ENCODE measurements at regions of chr7 and their contacts with region 1.

Region 1: DNA sequence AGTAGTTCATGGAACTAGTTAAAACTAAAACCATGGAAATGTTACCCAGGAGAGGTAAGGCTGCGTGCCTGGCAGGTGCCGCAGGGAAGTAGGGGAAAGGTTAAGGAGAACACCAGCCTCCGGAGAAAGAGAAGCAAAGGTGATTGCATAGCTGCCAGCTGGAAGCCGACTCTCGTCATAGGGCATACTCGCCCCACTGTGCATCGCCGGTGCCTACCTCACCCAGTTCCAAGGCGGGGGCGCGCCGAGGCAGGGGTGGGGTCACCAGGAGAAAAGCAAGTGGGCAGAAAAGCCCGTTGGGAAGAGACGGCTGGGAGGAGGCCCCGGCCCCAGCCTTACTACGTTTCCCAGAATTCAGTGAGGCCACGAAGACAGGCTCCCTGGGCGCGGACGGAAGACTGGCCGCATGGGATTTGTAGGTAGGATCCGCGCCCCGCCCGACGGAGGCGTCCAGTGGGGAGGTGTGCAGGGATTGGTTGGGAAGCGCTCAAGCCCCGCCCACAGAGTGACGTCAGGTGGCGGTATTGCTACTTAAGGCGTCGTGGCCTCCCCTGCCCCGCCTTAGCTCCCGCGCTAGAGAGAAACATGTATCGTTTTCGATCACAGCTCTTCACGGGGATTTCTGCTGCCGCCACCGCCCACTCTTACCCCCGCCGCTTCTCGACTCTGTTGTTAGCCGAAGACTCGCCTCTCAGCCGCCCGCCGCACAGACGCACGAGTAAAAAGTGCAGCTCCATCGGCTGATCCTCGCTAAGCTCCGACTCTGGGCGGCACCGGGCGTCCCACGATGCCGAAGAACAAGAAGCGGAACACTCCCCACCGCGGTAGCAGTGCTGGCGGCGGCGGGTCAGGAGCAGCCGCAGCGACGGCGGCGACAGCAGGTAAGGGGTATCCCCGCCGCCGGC is at the start of gene IFRD1:
- DNase-seq: peak; percentile 99 to 100 (median 99)
- ATAC-seq: peak; percentile 89
- H3K4me3 ChIP-seq: peak within 1 kb of the TSS; percentile 88
- H3K27ac ChIP-seq: peak within 1 kb of the TSS; percentile 87
- H3K4me1 ChIP-seq: peaks cover 8 to 12% of the 10 kb centered on the region in 2 experiments; a peak in 4 of 5 replicates
- H3K27me3 ChIP-seq: no peaks in the 10 kb centered on the region
- CTCF ChIP-seq: 0 out of 6 replicates have a peak, but pooled peaks of 1 of the 3 experiments have one; percentile 6
- EP300 ChIP-seq: no peak; the same call in none of the 2 replicates
- POLR2A ChIP-seq: peak; percentile 100
- RAD21 ChIP-seq: peak in 1 of 2 experiments; percentile 13; a peak in 2 of 4 replicates
- polyA plus RNA-seq, gene IFRD1: 27.6 to 37.0 TPM

Region 2: DNA sequence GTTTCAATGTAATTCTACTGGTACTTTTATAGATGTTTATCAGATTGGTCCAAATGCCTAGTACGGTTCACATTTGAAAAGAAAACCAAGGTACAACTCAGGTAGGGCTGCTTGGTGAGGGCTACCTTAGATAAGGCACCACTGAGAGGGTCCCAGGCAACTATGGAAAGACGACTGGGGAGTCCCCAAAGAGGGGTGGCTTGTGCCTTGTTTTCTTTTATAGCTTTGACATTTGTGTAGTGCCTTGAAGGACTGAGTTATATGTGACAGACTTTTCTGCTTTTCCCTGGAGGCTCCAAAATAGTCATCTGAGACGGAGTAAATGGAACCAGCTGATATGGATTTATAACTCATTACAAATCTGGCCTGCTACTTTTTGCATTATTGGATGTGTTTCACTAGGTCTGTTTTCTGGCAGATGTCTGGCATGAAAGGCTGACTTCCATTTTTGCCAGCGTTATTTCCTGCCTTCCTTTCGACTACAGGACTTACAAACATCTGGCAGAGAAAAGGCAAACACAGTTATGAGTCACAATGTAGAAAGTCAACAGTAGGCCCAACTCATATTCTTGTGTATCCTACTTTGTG is 799.6 kb before region 1 on chr7:
- CTCF ChIA-PET with region 1: no interaction called
- POLR2A ChIA-PET with region 1: no interaction called
- in situ Hi-C with region 1: no loop called
- intact Hi-C with region 1: no loop called
- DNase-seq: no peak
- ATAC-seq: no peak
- H3K4me3 ChIP-seq: no peak overlapping the region
- H3K27ac ChIP-seq: no peak overlapping the region
- H3K4me1 ChIP-seq: no peaks in the 10 kb centered on the region
- H3K27me3 ChIP-seq: no peaks in the 10 kb centered on the region; a peak in 1 of 5 replicates
- CTCF ChIP-seq: no peak
- EP300 ChIP-seq: no peak
- POLR2A ChIP-seq: no peak
- RAD21 ChIP-seq: no peak

Region 3: DNA sequence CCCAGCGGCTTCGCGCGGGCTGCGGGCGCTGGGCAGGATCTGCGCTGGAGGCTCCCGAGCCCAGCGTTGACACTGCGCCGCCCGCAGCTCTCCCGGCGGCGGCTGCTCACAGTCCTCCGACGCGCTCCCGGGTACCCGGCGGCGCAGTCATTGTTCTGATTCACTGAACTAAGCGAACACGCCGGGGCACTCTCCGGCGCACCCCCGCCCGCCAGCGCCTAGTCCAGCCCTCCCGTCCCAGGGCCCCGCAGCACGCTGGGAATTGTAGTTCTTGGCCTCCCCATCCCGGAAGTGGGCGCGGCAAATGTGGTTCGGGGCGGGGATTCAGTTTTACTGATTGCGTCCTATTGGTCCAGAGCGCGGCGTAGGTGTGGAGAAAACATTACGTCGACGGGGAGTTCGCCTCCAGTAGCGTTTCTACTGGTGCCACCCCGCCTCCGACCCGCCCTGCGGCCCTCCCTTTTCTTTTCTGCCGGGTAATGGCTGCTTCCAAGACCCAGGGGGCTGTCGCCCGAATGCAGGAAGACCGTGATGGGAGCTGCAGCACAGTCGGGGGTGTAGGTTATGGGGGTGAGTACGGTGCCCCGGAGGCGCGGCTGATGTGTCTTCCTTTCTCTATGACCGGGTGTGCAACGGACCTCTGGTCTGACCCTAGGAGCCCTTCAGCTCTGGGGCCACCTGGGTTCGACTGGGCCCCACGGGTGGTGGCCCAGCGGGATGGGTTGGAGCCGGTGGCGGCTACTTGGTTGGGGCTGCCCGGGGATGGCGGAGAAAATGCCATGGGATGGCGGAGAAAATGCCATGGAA is 243.7 kb before region 1 on chr7 and contains the starts of genes DOCK4 and ZNF277:
- CTCF ChIA-PET with region 1: no interaction called
- POLR2A ChIA-PET with region 1: interaction called, 14 read pairs
- in situ Hi-C with region 1: no loop called
- intact Hi-C with region 1: no loop called
- DNase-seq: peak; percentile 98 to 100 (median 98)
- ATAC-seq: peak; percentile 97
- H3K4me3 ChIP-seq: peak within 1 kb of the TSS; percentile 79
- H3K27ac ChIP-seq: peak within 1 kb of the TSS; percentile 52
- H3K4me1 ChIP-seq: peaks cover 12 to 16% of the 10 kb centered on the region in 2 experiments; a peak in 4 of 5 replicates
- H3K27me3 ChIP-seq: peaks cover 23 to 24% of the 10 kb centered on the region in 2 experiments
- CTCF ChIP-seq: peak in 1 of 3 experiments; percentile 10; a peak in 1 of 6 replicates
- EP300 ChIP-seq: no peak; the same call in 1 of the 2 replicates
- POLR2A ChIP-seq: peak; percentile 80
- RAD21 ChIP-seq: no peak
- polyA plus RNA-seq, gene DOCK4: 0.42 to 0.45 TPM
- polyA plus RNA-seq, gene ZNF277: 27.4 to 27.7 TPM

Region 4: DNA sequence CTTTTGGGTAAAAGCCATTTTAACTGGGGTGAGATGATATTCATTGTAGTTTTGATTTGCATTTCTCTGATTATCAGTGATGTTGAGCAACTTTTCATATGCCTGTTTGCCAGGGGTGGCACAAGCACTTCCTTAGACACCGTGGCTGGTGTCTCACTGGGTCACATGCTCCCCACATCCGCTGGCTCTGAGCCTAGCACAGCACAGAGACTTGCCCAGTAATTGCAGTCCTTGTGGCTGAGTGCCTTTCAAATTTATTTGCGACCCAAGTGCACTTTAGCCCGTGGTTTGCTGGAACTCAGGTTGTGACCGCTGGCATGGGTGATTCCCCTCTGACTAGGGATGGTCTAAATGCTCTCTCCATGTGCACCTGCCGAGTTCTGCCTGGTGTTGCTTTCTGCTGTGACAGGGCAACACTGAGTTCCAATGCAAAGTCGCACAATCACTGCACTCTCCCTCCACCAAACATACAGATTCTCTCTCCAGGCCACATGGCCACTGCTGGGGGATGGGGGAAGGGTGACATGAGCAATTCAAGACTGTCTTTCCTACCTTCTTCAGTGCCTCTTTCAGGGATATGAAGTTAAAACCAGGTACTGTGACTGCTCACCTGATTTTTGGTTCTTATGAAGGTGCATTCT is 177.1 kb before region 1 on chr7:
- CTCF ChIA-PET with region 1: no interaction called
- POLR2A ChIA-PET with region 1: no interaction called
- in situ Hi-C with region 1: no loop called
- intact Hi-C with region 1: no loop called
- DNase-seq: no peak
- ATAC-seq: peak; percentile 49
- H3K4me3 ChIP-seq: no peak overlapping the region
- H3K27ac ChIP-seq: no peak overlapping the region
- H3K4me1 ChIP-seq: no peaks in the 10 kb centered on the region
- H3K27me3 ChIP-seq: peaks cover 0 to 5% of the 10 kb centered on the region in 2 experiments; a peak in 1 of 5 replicates
- CTCF ChIP-seq: no peak
- EP300 ChIP-seq: no peak
- POLR2A ChIP-seq: no peak
- RAD21 ChIP-seq: no peak

Region 5: DNA sequence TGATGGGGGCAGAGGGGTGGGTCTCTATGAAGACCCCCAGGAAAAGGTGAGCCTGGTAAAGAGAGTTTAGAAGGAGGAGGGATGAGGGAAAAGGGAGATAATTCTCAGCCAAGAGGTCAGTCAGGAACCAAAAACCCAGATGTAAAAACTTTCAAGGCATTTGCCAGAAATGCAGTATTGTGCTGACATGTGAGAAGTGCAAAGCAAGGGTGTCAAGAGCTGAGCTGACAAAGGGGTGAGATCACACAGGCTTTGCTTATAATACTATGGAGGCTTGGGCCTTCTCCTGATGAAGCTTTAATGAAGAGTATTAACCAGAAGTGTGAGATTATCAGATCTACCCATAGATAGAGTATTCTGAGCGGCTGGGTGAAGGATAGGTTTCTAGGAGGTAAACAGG is 22.2 kb before region 1 on chr7:
- CTCF ChIA-PET with region 1: no interaction called
- POLR2A ChIA-PET with region 1: interaction called, 21 read pairs
- in situ Hi-C with region 1: no loop called
- intact Hi-C with region 1: no loop called
- DNase-seq: no peak
- ATAC-seq: no peak
- H3K4me3 ChIP-seq: no peak overlapping the region
- H3K27ac ChIP-seq: no peak overlapping the region
- H3K4me1 ChIP-seq: peaks cover 0 to 8% of the 10 kb centered on the region in 2 experiments; a peak in 3 of 5 replicates
- H3K27me3 ChIP-seq: peaks cover 6 to 8% of the 10 kb centered on the region in 2 experiments; a peak in 3 of 5 replicates
- CTCF ChIP-seq: no peak
- EP300 ChIP-seq: no peak
- POLR2A ChIP-seq: no peak
- RAD21 ChIP-seq: no peak

Region 6: GRCh38 chr7:112462236-112462635 is 12.1 kb after region 1 on chr7:
- CTCF ChIA-PET with region 1: no interaction called
- POLR2A ChIA-PET with region 1: interaction called, 113 read pairs
- in situ Hi-C with region 1: no loop called
- intact Hi-C with region 1: no loop called
- DNase-seq: no peak
- ATAC-seq: no peak
- H3K4me3 ChIP-seq: no peak overlapping the region
- H3K27ac ChIP-seq: no peak overlapping the region
- H3K4me1 ChIP-seq: no peaks in the 10 kb centered on the region
- H3K27me3 ChIP-seq: no peaks in the 10 kb centered on the region
- CTCF ChIP-seq: no peak
- EP300 ChIP-seq: no peak
- POLR2A ChIP-seq: no peak
- RAD21 ChIP-seq: no peak

Region 7: DNA sequence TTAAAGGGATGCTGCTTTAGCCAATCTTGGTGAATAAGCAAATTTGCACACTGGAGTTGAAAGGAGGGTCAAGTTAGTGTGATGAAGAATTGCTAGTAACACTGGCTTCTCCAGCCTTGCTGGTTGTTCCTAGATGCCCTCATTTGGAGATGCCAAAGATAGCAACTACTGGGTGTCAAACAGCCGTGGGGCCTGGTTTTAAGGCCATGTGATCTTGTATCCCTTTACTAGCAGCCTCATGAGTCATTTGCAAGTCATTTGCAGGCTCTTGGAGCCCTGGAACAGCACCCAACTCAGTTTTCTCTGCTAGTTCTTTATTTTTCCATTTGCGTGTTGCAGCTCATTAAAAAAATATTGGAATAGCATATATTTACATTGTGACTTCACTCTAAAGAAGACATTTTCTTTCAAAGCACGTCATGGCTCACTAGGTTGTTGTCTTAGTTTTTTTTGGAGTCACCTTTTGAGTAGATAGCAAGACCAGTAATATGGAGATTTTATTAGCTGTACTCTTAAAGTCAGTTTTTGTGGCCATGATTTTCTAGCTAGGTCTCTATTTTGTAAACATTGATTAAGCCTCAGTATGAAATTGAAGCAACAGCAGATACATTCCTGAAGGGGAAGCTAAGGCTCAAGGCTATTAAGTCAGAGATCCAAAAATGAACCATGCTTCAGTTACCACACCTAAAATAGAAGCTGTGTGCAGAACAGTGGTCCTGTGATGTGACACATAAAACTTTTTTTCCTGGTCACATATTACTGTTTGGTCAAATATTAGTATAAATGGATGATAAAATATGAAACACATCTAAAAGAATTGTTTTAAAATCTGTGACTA is 31.9 kb after region 1 on chr7:
- CTCF ChIA-PET with region 1: no interaction called
- POLR2A ChIA-PET with region 1: interaction called, 14 read pairs
- in situ Hi-C with region 1: no loop called
- intact Hi-C with region 1: no loop called
- DNase-seq: peak in 2 of 4 experiments; percentile 50 to 67
- ATAC-seq: peak; percentile 49
- H3K4me3 ChIP-seq: no peak overlapping the region
- H3K27ac ChIP-seq: no peak overlapping the region
- H3K4me1 ChIP-seq: peaks cover 4 to 24% of the 10 kb centered on the region in 2 experiments; a peak in 3 of 5 replicates
- H3K27me3 ChIP-seq: no peaks in the 10 kb centered on the region
- CTCF ChIP-seq: no peak
- EP300 ChIP-seq: no peak
- POLR2A ChIP-seq: no peak
- RAD21 ChIP-seq: no peak

Region 8: GRCh38 chr7:112939574-112940314 is 489.6 kb after region 1 on chr7:
- CTCF ChIA-PET with region 1: no interaction called
- POLR2A ChIA-PET with region 1: interaction called, 12 read pairs
- in situ Hi-C with region 1: no loop called
- intact Hi-C with region 1: no loop called
- DNase-seq: peak; percentile 100
- ATAC-seq: peak; percentile 99
- H3K4me3 ChIP-seq: peak overlapping the region; percentile 81
- H3K27ac ChIP-seq: peak overlapping the region; percentile 80
- H3K4me1 ChIP-seq: peaks cover 3 to 7% of the 10 kb centered on the region in 2 experiments; a peak in 3 of 5 replicates
- H3K27me3 ChIP-seq: no peaks in the 10 kb centered on the region
- CTCF ChIP-seq: no peak
- EP300 ChIP-seq: no peak
- POLR2A ChIP-seq: peak; percentile 90; the same call in 1 of the 2 replicates
- RAD21 ChIP-seq: peak in 1 of 2 experiments; percentile 29; a peak in 1 of 4 replicates

Measured in K562 (cell line).